Panc1 (cell line): ENCODE measurements at regions of chr15 and their contacts with region 1.

Region 1: GRCh38 chr15:101667881-101668280 is 15.7 kb upstream of the TM2D3 start:
- DNase-seq: no peak
- ATAC-seq: no peak
- H3K4me3 ChIP-seq: no peak overlapping the region
- H3K27ac ChIP-seq: no peak overlapping the region
- H3K4me1 ChIP-seq: peaks cover 6% of the 10 kb centered on the region
- H3K27me3 ChIP-seq: no peaks in the 10 kb centered on the region
- CTCF ChIP-seq: no peak

Region 2: GRCh38 chr15:101679806-101680205 is 11.9 kb after region 1 on chr15:
- CTCF ChIA-PET with region 1: no interaction called
- POLR2A ChIA-PET with region 1: no interaction called
- in situ Hi-C with region 1: no loop called
- intact Hi-C with region 1: no loop called
- DNase-seq: no peak
- ATAC-seq: no peak
- H3K4me3 ChIP-seq: no peak overlapping the region
- H3K27ac ChIP-seq: no peak overlapping the region
- H3K4me1 ChIP-seq: no peaks in the 10 kb centered on the region
- H3K27me3 ChIP-seq: no peaks in the 10 kb centered on the region
- CTCF ChIP-seq: no peak

Region 3: GRCh38 chr15:101689901-101690300 is 22.0 kb after region 1 on chr15:
- CTCF ChIA-PET with region 1: no interaction called
- POLR2A ChIA-PET with region 1: interaction called, 17 read pairs
- in situ Hi-C with region 1: no loop called
- intact Hi-C with region 1: no loop called
- DNase-seq: no peak
- ATAC-seq: no peak
- H3K4me3 ChIP-seq: no peak overlapping the region
- H3K27ac ChIP-seq: no peak overlapping the region
- H3K4me1 ChIP-seq: no peaks in the 10 kb centered on the region
- H3K27me3 ChIP-seq: no peaks in the 10 kb centered on the region
- CTCF ChIP-seq: no peak